GM12878 (cell line): ENCODE measurements at regions of chr16 and their contacts with region 1.

Region 1: DNA sequence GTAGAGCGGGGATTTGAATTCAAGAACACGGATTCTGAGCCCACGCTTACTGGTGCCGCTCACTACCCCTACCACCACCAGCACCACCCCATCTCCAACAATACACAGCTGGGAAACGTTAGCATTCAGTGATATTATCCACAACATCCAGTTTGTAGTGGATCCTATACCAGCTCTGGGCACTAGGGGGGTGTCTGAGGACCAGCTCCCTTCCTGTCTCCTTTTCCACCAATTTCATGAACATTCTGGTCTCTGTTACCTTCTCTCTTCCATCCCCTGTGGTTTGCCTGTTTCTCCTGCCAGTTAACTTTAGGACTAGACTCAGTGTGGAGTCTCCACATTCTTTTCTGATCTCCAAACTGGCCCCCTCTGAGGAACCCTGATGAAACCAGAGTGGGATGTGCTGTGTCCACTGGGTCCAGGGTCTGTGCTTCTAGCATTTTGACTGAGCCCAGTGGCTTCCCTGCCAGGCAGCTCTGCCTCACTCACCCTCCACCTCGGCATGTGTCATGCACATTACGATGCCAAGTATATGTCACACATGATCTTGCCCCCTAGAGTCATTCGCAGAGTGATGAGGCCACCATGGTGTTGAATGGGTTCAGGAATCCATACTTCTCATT is 187.0 kb upstream of the CDH13 start:
- DNase-seq: no peak
- ATAC-seq: peak; percentile 78
- H3K4me3 ChIP-seq: no peak overlapping the region
- H3K27ac ChIP-seq: no peak overlapping the region
- H3K4me1 ChIP-seq: no peaks in the 10 kb centered on the region
- H3K27me3 ChIP-seq: 0 out of 4 replicates have a peak, but pooled peaks cover 0 to 2% of the 10 kb centered on the region in 2 experiments
- CTCF ChIP-seq: peak; percentile 39 to 49 (median 43)
- EP300 ChIP-seq: no peak
- POLR2A ChIP-seq: no peak
- RAD21 ChIP-seq: no peak

Region 2: GRCh38 chr16:82456683-82457082 is 16.9 kb after region 1 on chr16:
- CTCF ChIA-PET with region 1: interaction called, 11 read pairs
- POLR2A ChIA-PET with region 1: no interaction called
- RAD21 ChIA-PET with region 1: no interaction called
- SMC1A ChIA-PET with region 1: interaction called, 3 read pairs
- in situ Hi-C with region 1: no loop called
- intact Hi-C with region 1: no loop called
- DNase-seq: no peak
- ATAC-seq: peak; percentile 98
- H3K4me3 ChIP-seq: no peak overlapping the region
- H3K27ac ChIP-seq: no peak overlapping the region
- H3K4me1 ChIP-seq: no peaks in the 10 kb centered on the region
- H3K27me3 ChIP-seq: no peaks in the 10 kb centered on the region; a peak in 1 of 4 replicates
- CTCF ChIP-seq: peak; percentile 67 to 82 (median 73)
- EP300 ChIP-seq: no peak
- POLR2A ChIP-seq: no peak
- RAD21 ChIP-seq: peak; percentile 49